ENCODE measurements at regions of chr14 and their contacts with region 1.

Region 1: GRCh38 chr14:105844810-105845724 is 318.7 kb downstream of the TMEM121 start:
- DNase-seq: peak; percentile 7 to 46
- H3K4me3 ChIP-seq: no peak overlapping the region
- H3K27ac ChIP-seq: no peak overlapping the region
- H3K4me1 ChIP-seq: no peaks in the 10 kb centered on the region
- H3K27me3 ChIP-seq: peaks cover 0 to 9% of the 10 kb centered on the region in 2 donors
- CTCF ChIP-seq: no peak
- POLR2A ChIP-seq: no peak

Region 2: GRCh38 chr14:104542871-104543830 is 1301.9 kb before region 1 on chr14:
- intact Hi-C with region 1: loop called (anchors 5 kb)
- DNase-seq: peak in 1 of 2 donors; percentile 42
- H3K4me3 ChIP-seq: no peak overlapping the region
- H3K27ac ChIP-seq: no peak overlapping the region
- H3K4me1 ChIP-seq: no peaks in the 10 kb centered on the region
- H3K27me3 ChIP-seq: peaks cover 0 to 63% of the 10 kb centered on the region in 2 donors
- CTCF ChIP-seq: no peak
- POLR2A ChIP-seq: no peak

Region 3: DNA sequence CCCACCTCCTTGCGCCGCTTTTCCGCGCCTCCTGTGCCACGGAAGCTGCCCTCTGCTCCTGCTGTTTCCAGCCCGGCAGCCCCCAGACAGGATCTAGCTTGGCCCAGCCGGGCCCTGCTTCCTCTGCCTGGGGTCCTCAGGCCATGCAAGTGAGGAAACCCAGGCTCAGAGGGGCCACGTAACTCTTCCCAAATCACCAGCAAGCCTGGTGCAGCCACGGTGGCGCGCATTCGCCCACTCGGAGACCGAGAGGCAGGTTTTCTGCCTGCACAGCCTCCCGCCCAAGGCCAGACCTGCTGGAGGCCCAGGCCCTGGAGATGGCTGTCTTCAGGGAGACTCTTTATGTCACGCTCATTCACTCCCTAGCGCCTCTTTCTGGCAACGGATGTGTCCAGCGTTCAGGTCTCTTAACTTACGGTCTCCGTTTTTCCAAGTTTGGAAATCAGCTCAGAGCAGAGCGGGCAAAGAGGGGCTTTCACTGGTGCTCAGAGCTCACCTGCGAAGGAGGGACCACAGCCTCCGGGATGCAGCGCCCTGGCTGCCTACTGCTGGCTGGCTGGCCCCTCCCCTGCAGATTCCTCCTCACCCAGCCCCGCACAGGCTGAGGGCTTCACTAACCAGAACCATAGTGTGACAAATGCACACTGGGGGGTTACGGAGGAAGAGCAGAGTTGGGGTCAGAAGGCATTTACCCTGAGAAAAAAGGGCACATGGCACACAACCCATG is 1000.6 kb before region 1 on chr14:
- intact Hi-C with region 1: no loop called
- DNase-seq: peak in 1 of 2 donors; percentile 40
- H3K4me3 ChIP-seq: peak overlapping the region; percentile 33 to 66 (median 49)
- H3K27ac ChIP-seq: no peak overlapping the region
- H3K4me1 ChIP-seq: peaks cover 2 to 4% of the 10 kb centered on the region in 2 donors
- H3K27me3 ChIP-seq: peaks cover 0 to 17% of the 10 kb centered on the region in 2 donors
- CTCF ChIP-seq: no peak
- POLR2A ChIP-seq: no peak

Region 4: GRCh38 chr14:105107781-105108515 is 737.1 kb before region 1 on chr14:
- intact Hi-C with region 1: no loop called
- DNase-seq: peak in 1 of 2 donors; percentile 6
- H3K4me3 ChIP-seq: no peak overlapping the region
- H3K27ac ChIP-seq: no peak overlapping the region
- H3K4me1 ChIP-seq: no peaks in the 10 kb centered on the region
- H3K27me3 ChIP-seq: no peaks in the 10 kb centered on the region
- CTCF ChIP-seq: no peak
- POLR2A ChIP-seq: no peak

Region 5: DNA sequence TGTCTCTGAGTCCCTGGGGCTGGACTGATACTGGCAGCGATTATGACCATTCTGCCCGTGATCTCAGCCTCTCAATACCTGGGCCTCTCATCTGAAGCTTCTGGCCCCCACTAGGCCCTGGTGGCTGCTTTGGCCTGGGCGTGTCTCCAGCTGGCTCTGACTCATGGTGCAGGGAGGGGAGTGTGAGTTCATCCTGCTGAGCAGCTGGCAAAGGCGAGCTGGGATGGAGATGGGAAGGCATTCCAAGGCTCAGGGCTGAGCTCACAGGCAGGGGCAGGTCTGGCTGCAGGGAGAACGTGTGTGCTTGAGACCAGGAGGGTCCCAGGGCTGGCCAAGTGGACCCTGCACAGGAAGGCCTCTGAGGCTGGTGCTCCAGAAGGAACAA is 96.9 kb before region 1 on chr14:
- intact Hi-C with region 1: no loop called
- DNase-seq: peak in 1 of 2 donors; percentile 14
- H3K4me3 ChIP-seq: no peak overlapping the region
- H3K27ac ChIP-seq: no peak overlapping the region
- H3K4me1 ChIP-seq: no peaks in the 10 kb centered on the region
- H3K27me3 ChIP-seq: peaks cover 0 to 7% of the 10 kb centered on the region in 2 donors
- CTCF ChIP-seq: no peak
- POLR2A ChIP-seq: no peak

Region 6: GRCh38 chr14:105793836-105794235 is 51.2 kb before region 1 on chr14:
- intact Hi-C with region 1: loop called (anchors 2 kb)
- DNase-seq: no peak
- H3K4me3 ChIP-seq: no peak overlapping the region
- H3K27ac ChIP-seq: no peak overlapping the region
- H3K4me1 ChIP-seq: no peaks in the 10 kb centered on the region
- H3K27me3 ChIP-seq: peaks cover 0 to 12% of the 10 kb centered on the region in 2 donors
- CTCF ChIP-seq: no peak
- POLR2A ChIP-seq: no peak

Region 7: GRCh38 chr14:105879867-105880561 is 34.9 kb after region 1 on chr14:
- intact Hi-C with region 1: no loop called
- DNase-seq: peak in 1 of 2 donors; percentile 47
- H3K4me3 ChIP-seq: no peak overlapping the region
- H3K27ac ChIP-seq: no peak overlapping the region
- H3K4me1 ChIP-seq: no peaks in the 10 kb centered on the region
- H3K27me3 ChIP-seq: peaks cover 0 to 9% of the 10 kb centered on the region in 2 donors
- CTCF ChIP-seq: no peak
- POLR2A ChIP-seq: no peak

Measured in breast epithelium (tissue), 4 donors.